ENCODE measurements at regions of chr9 and their contacts with region 1.

Region 1: DNA sequence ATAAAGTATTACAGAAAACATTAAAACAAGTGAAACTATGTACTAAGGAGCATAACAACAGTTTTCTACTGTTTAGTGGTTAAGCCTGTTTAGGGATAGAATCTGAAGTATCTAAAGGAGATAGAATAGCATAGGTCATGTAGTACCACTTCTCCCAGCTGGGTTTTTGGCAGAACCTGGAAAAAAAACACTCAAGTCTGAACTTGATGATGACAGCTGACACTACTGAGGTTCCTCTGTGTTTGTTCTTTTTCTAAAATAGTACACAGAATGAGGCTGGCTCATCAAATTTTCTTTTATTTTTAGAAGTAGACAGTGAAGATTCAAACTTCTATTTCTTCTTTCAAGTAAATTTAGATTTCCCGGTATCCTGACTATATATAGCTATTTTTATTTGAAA is 203.8 kb upstream of the ACO1 start:
- DNase-seq: no peak
- H3K4me3 Mint-ChIP-seq: no peak overlapping the region
- H3K27ac Mint-ChIP-seq: no peak overlapping the region
- H3K4me1 Mint-ChIP-seq: no peaks in the 10 kb centered on the region
- H3K27me3 Mint-ChIP-seq: no peaks in the 10 kb centered on the region

Region 2: DNA sequence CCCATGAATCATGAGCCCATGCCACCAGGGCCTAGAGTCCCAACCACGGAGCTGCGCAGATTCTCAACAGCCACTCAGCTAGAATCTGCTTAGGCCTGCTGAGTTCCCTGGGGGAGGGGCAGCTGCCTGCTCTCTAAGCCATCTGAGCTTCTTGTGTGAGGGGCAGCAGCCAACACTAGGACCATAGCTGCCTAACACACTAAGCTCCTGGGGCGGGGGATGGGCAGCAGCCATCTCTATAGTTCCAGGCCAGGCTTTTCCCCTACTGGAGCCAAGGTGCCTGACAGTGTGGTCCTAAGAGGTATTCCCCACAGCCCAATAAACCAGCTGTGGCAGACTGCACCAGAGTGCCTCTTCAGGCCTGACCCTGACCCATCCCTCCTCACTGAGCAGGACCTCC is 52.1 kb before region 1 on chr9:
- intact Hi-C with region 1: loop called (anchors 10 kb)
- DNase-seq: no peak
- H3K4me3 Mint-ChIP-seq: no peak overlapping the region
- H3K27ac Mint-ChIP-seq: no peak overlapping the region
- H3K4me1 Mint-ChIP-seq: no peaks in the 10 kb centered on the region
- H3K27me3 Mint-ChIP-seq: no peaks in the 10 kb centered on the region

Region 3: GRCh38 chr9:32196756-32197155 is 16.2 kb after region 1 on chr9:
- intact Hi-C with region 1: no loop called
- DNase-seq: no peak
- H3K4me3 Mint-ChIP-seq: no peak overlapping the region
- H3K27ac Mint-ChIP-seq: no peak overlapping the region
- H3K4me1 Mint-ChIP-seq: no peaks in the 10 kb centered on the region
- H3K27me3 Mint-ChIP-seq: no peaks in the 10 kb centered on the region

Measured in activated T-helper 1 cell treated with anti-CD3 and anti-CD28 coated beads, Interleukin-12 subunit alpha, Interleukin-12 subunit beta, Interleukin-2, Interleukin-4 antibody, amounts not matched to agents 30 ng/mL and 10 ng/mL and 1 ng/mL, durations not matched to agents 14 hours and 24 hours and 36 hours (primary cell).